ENCODE measurements at regions of chr14 and their contacts with region 1.

Region 1: GRCh38 chr14:89915114-89915878 is 39.2 kb downstream of the EFCAB11 start:
- DNase-seq: peak; percentile 72
- ATAC-seq: peak; percentile 54
- H3K4me3 ChIP-seq: no peak overlapping the region
- H3K4me3 Mint-ChIP-seq: no peak overlapping the region
- H3K27ac ChIP-seq: no peak overlapping the region
- H3K27ac Mint-ChIP-seq: no peak overlapping the region
- H3K4me1 ChIP-seq: no peaks in the 10 kb centered on the region
- H3K4me1 Mint-ChIP-seq: peaks cover 3% of the 10 kb centered on the region
- H3K27me3 ChIP-seq: no peaks in the 10 kb centered on the region
- H3K27me3 Mint-ChIP-seq: peaks cover 3% of the 10 kb centered on the region
- CTCF ChIP-seq: peak; percentile 98

Region 2: DNA sequence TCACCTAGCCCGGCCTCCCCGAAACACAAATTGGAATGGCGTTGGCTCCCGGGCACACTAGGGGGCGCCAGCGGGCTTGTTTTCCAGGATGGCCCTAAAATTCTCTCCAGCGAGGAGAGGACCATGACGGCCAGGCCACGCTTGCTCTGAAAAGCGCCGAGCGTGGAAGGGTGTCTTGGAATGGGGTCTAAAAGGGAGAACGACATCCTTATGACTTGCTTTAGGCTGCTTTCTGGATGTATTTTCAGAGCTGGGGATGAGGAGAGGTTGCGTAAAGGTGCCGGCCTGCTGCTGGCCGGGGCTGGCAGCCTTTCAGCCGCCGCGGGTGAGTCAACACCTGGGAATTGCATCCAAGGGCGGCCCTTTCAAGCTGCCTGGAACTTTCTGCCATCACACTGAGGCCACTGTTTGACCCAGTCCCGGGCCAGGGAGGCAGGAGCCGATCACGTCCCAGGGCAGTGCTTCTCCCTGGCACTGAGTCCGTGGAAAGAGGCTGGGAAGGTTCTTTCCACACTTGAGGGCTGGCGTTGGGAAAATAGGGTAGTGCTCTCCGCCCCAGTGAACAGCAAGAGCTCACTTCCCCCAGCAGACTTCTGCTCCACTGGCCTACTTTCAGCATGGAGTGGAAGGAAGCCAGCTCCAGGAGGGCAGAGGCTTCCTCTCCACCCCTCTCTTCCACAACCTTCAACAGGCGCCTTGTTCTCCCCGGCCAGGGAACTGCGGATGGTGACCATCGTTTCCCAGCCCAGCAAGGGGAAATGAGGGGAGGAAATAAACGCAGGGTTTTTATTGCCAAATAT is 874.6 kb before region 1 on chr14:
- CTCF ChIA-PET with region 1: interaction called, 41 read pairs
- POLR2A ChIA-PET with region 1: no interaction called
- intact Hi-C with region 1: loop called (anchors 1 kb)
- DNase-seq: peak; percentile 79
- ATAC-seq: peak; percentile 68
- H3K4me3 ChIP-seq: peak overlapping the region in 4 of 5 experiments; percentile 35 to 63 (median 42)
- H3K4me3 Mint-ChIP-seq: peak overlapping the region; percentile 85
- H3K27ac ChIP-seq: no peak overlapping the region
- H3K27ac Mint-ChIP-seq: no peak overlapping the region
- H3K4me1 ChIP-seq: peaks cover 15% of the 10 kb centered on the region in 2 donors
- H3K4me1 Mint-ChIP-seq: peaks cover 15% of the 10 kb centered on the region
- H3K27me3 ChIP-seq: peaks cover 0 to 12% (median 7%) of the 10 kb centered on the region in 4 experiments
- H3K27me3 Mint-ChIP-seq: peaks cover 47% of the 10 kb centered on the region
- CTCF ChIP-seq: peak; percentile 85

Region 3: DNA sequence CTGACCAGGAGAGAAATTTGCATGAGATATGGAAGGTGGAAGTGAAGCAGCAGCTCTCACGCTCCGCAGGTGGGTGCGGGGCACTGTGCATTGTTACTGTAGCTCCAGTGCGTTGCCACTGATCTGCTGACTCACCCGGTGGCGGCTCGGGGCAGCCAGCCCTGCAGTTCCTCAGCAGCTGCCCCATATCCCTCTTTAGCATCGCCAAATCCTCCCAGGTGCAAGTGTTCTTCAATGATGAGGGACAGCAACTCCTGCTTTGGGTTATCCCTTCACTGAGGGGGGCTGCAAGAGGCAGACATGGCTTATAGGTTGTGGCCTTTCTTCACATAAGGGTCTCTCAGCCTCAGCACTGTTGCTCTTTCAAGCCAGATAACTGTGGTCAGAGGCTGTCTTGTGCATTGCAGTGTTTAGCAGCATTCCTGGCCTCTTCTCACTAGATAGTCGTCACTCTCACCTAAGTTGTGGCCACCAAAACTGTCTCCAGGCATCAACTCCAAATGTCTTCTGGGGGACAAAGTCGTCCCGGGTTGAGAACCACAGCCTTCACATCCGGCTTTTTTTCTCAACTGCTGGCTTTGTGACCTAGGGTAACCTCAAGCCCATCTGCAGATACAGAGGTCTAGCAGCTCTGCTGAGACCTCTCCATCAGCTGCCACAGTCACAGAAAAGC is 141.5 kb before region 1 on chr14:
- CTCF ChIA-PET with region 1: no interaction called
- POLR2A ChIA-PET with region 1: no interaction called
- intact Hi-C with region 1: loop called (anchors 5 kb)
- DNase-seq: peak; percentile 53
- ATAC-seq: peak; percentile 87
- H3K4me3 ChIP-seq: peak overlapping the region in 1 of 5 experiments; percentile 22
- H3K4me3 Mint-ChIP-seq: peak overlapping the region; percentile 32
- H3K27ac ChIP-seq: no peak overlapping the region
- H3K27ac Mint-ChIP-seq: peak overlapping the region; percentile 51
- H3K4me1 ChIP-seq: peaks cover 18 to 22% of the 10 kb centered on the region in 2 donors
- H3K4me1 Mint-ChIP-seq: peaks cover 22% of the 10 kb centered on the region
- H3K27me3 ChIP-seq: no peaks in the 10 kb centered on the region
- H3K27me3 Mint-ChIP-seq: no peaks in the 10 kb centered on the region
- CTCF ChIP-seq: no peak

Measured in B cell (primary cell).